SK-N-SH (cell line): ENCODE measurements at regions of chr17 and their contacts with region 1.

Region 1: GRCh38 chr17:66975604-66976384 is 11.3 kb downstream of the CACNG4 start:
- DNase-seq: no peak
- H3K4me3 ChIP-seq: no peak overlapping the region
- H3K27ac ChIP-seq: peak overlapping the region in 1 of 2 experiments; percentile 95; a peak in 2 of 4 replicates
- H3K4me1 ChIP-seq: peaks cover 5 to 80% of the 10 kb centered on the region in 2 experiments; a peak in 3 of 4 replicates
- H3K27me3 ChIP-seq: no peaks in the 10 kb centered on the region
- CTCF ChIP-seq: peak; percentile 51
- EP300 ChIP-seq: 0 out of 4 replicates have a peak, but pooled peaks of 1 of the 2 experiments have one; percentile 1
- RAD21 ChIP-seq: peak; percentile 65

Region 2: DNA sequence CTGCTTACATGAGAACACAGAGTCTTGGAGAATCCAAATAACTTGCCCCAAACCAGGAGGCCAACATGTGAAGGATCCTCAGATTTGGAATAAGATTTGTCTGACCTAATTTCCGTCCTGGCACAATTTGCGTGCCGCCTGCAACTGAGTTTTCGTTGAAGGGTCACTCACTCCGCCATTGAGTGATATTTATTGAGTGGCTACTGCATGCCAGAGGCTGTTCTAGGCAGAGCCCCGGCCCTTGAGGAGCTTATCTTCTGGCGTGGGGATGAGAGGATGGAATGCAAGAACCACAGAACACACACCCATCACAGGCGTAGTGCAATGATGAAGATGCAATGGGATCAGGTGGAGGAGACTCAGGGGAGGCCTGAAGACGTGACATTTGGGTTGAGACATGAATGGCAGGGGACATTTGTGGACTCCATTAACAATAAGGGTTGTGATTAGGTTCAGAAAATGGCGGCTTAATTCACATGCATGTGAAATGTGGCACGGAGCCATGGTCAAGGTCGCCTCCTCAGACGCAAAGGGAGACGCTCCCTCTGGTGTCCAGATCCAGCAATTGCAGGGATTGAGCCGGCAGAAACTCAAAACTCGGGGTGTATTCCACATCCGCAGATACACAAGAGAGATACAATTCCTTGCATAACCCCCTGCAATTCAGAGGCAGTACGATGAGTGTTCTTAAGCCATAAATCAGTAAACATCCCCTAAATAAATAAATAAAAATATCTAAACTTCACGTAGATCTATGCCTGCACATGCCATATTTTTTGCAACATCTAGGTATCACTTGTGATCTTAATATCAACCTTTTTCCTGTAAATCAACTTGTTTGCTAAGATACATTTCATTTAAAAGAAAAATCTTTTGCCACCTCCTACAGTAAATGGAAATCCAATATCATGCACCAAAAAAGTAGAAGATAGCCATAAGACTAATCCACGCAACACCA is 69.2 kb before region 1 on chr17:
- CTCF ChIA-PET with region 1: interaction called, 12 read pairs
- POLR2A ChIA-PET with region 1: no interaction called
- DNase-seq: peak; percentile 87
- H3K4me3 ChIP-seq: no peak overlapping the region; a peak in 1 of 4 replicates
- H3K27ac ChIP-seq: no peak overlapping the region; a peak in 1 of 4 replicates
- H3K4me1 ChIP-seq: peaks cover 9 to 20% of the 10 kb centered on the region in 2 experiments; a peak in 3 of 4 replicates
- H3K27me3 ChIP-seq: no peaks in the 10 kb centered on the region; the same call in 1 of the 2 replicates
- CTCF ChIP-seq: peak; percentile 98
- EP300 ChIP-seq: peak in 1 of 2 experiments; percentile 26; a peak in 1 of 4 replicates
- RAD21 ChIP-seq: peak; percentile 95

Region 3: DNA sequence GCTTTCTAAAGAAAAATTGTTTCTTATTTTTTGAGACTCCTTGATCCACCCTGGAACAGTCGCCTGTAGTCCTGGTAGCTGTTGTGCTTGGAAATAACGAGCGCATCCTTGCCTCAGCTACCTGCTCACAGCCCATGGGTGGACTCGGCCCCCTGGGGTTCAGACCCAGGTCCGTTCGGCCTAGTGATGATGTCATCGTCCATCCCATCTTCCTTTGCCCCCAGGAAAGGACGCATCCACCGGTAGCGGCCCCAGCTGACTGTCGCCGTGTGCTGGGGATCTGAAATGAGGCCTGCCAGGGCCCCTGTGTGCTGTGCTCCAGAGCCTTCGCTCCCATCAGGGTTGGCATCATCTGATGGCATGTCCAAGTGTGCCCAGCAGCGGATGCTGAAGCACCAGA is 56.6 kb after region 1 on chr17:
- CTCF ChIA-PET with region 1: no interaction called
- POLR2A ChIA-PET with region 1: no interaction called
- DNase-seq: no peak
- H3K4me3 ChIP-seq: no peak overlapping the region
- H3K27ac ChIP-seq: no peak overlapping the region; a peak in 1 of 4 replicates
- H3K4me1 ChIP-seq: no peaks in the 10 kb centered on the region
- H3K27me3 ChIP-seq: no peaks in the 10 kb centered on the region
- CTCF ChIP-seq: no peak
- EP300 ChIP-seq: no peak
- RAD21 ChIP-seq: no peak

Region 4: DNA sequence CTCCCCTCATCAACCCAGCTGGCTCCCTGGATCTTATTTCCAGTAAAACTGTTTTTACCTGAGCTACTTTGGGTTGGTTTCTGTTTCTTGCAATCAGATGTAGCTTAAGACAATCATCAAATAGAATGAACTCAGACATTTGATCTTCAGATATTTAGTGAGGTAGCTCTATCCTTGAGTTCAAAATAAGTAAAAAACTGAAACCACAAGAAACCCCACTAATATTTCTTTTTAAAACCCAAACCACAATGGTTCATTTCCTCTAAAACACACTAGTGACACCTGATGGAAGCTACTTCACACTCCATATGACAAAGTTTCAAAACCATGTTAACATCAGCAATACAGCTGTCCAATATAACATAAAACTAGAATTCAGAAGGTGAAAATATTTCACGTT is 106.3 kb after region 1 on chr17:
- CTCF ChIA-PET with region 1: interaction called, 11 read pairs
- POLR2A ChIA-PET with region 1: no interaction called
- DNase-seq: no peak
- H3K4me3 ChIP-seq: no peak overlapping the region
- H3K27ac ChIP-seq: peak overlapping the region in 1 of 2 experiments; percentile 36; a peak in 1 of 4 replicates
- H3K4me1 ChIP-seq: peaks cover 0 to 10% of the 10 kb centered on the region in 2 experiments; a peak in 2 of 4 replicates
- H3K27me3 ChIP-seq: no peaks in the 10 kb centered on the region
- CTCF ChIP-seq: no peak
- EP300 ChIP-seq: no peak
- RAD21 ChIP-seq: peak; percentile 68

Region 5: GRCh38 chr17:67125417-67125816 is 149.6 kb after region 1 on chr17:
- CTCF ChIA-PET with region 1: interaction called, 10 read pairs
- POLR2A ChIA-PET with region 1: interaction called, 8 read pairs
- DNase-seq: peak; percentile 71
- H3K4me3 ChIP-seq: no peak overlapping the region
- H3K27ac ChIP-seq: peak overlapping the region; percentile 29 to 99; a peak in 3 of 4 replicates
- H3K4me1 ChIP-seq: peaks cover 4 to 47% of the 10 kb centered on the region in 2 experiments; a peak in 3 of 4 replicates
- H3K27me3 ChIP-seq: no peaks in the 10 kb centered on the region
- CTCF ChIP-seq: no peak
- EP300 ChIP-seq: peak; percentile 34 to 100; a peak in 3 of 4 replicates
- RAD21 ChIP-seq: peak; percentile 52